ENCODE measurements at regions of chr16 and their contacts with region 1.

Region 1: GRCh38 chr16:89873972-89874689 is 739 bp downstream of the TCF25 start:
- DNase-seq: peak; percentile 92
- H3K4me3 Mint-ChIP-seq: peak overlapping the region; percentile 89
- H3K27ac Mint-ChIP-seq: peak overlapping the region; percentile 99
- H3K4me1 Mint-ChIP-seq: peaks cover 11% of the 10 kb centered on the region
- H3K27me3 Mint-ChIP-seq: no peaks in the 10 kb centered on the region
- CTCF ChIP-seq: no peak

Region 2: GRCh38 chr16:89785523-89786155 is 88.5 kb before region 1 on chr16:
- CTCF ChIA-PET with region 1: no interaction called
- POLR2A ChIA-PET with region 1: no interaction called
- intact Hi-C with region 1: no loop called
- DNase-seq: no peak
- H3K4me3 Mint-ChIP-seq: no peak overlapping the region
- H3K27ac Mint-ChIP-seq: no peak overlapping the region
- H3K4me1 Mint-ChIP-seq: no peaks in the 10 kb centered on the region
- H3K27me3 Mint-ChIP-seq: no peaks in the 10 kb centered on the region
- CTCF ChIP-seq: no peak

Region 3: DNA sequence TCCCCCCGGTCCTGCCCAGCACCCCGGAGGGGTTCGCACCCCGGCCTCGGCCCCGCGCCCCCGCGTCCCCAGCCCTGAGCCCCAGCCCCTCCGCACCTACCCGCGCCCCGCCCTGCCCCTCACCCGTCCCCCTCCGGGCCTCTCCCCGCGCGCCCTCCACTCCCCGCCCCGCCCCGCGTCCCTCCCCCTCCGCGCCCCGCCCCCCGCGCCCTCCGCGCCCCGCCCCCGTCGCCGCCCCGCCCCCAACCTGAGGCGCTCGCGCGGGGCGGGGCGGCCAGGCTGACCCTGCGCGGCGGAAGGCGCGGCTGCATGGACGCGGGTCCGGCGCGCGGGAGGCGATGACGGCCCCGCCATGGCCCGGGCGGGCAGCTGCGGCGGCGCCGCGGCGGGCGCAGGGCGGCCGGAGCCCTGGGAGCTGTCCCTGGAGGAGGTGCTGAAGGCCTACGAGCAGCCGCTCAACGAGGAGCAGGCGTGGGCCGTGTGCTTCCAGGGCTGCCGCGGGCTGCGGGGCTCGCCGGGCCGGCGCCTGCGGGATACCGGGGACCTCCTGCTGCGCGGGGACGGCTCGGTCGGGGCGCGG is 45.8 kb before region 1 on chr16 and contains the start of gene SPIRE2:
- CTCF ChIA-PET with region 1: no interaction called
- POLR2A ChIA-PET with region 1: interaction called, 13 read pairs
- intact Hi-C with region 1: no loop called
- DNase-seq: peak; percentile 58
- H3K4me3 Mint-ChIP-seq: peak within 1 kb of the TSS; percentile 73
- H3K27ac Mint-ChIP-seq: peak within 1 kb of the TSS; percentile 61
- H3K4me1 Mint-ChIP-seq: no peaks in the 10 kb centered on the region
- H3K27me3 Mint-ChIP-seq: no peaks in the 10 kb centered on the region
- CTCF ChIP-seq: no peak
- total RNA-seq, gene SPIRE2: 3.8 and 4.8 TPM in 2 replicates

Region 4: GRCh38 chr16:89860747-89861304 is 13.3 kb before region 1 on chr16:
- CTCF ChIA-PET with region 1: interaction called, 24 read pairs
- POLR2A ChIA-PET with region 1: interaction called, 32 read pairs
- intact Hi-C with region 1: no loop called
- DNase-seq: peak; percentile 61
- H3K4me3 Mint-ChIP-seq: no peak overlapping the region
- H3K27ac Mint-ChIP-seq: no peak overlapping the region
- H3K4me1 Mint-ChIP-seq: peaks cover 27% of the 10 kb centered on the region
- H3K27me3 Mint-ChIP-seq: no peaks in the 10 kb centered on the region
- CTCF ChIP-seq: peak; percentile 98

Region 5: GRCh38 chr16:89922884-89923690 is 49.0 kb after region 1 on chr16 and contains the start of gene TUBB3:
- CTCF ChIA-PET with region 1: no interaction called
- POLR2A ChIA-PET with region 1: interaction called, 31 read pairs
- intact Hi-C with region 1: no loop called
- DNase-seq: peak; percentile 73
- H3K4me3 Mint-ChIP-seq: peak within 1 kb of the TSS; percentile 74
- H3K27ac Mint-ChIP-seq: peak within 1 kb of the TSS; percentile 76
- H3K4me1 Mint-ChIP-seq: peaks cover 13% of the 10 kb centered on the region
- H3K27me3 Mint-ChIP-seq: no peaks in the 10 kb centered on the region
- CTCF ChIP-seq: no peak
- total RNA-seq, gene TUBB3: 20.2 and 23.0 TPM in 2 replicates

Region 6: GRCh38 chr16:89972244-89973234 is 98.4 kb after region 1 on chr16:
- CTCF ChIA-PET with region 1: no interaction called
- POLR2A ChIA-PET with region 1: interaction called, 15 read pairs
- intact Hi-C with region 1: no loop called
- DNase-seq: peak; percentile 95
- H3K4me3 Mint-ChIP-seq: peak overlapping the region; percentile 89
- H3K27ac Mint-ChIP-seq: peak overlapping the region; percentile 57
- H3K4me1 Mint-ChIP-seq: peaks cover 12% of the 10 kb centered on the region
- H3K27me3 Mint-ChIP-seq: no peaks in the 10 kb centered on the region
- CTCF ChIP-seq: no peak